Endothelial cell of umbilical vein (primary cell): ENCODE measurements at regions of chrX and their contacts with region 1.

Region 1: DNA sequence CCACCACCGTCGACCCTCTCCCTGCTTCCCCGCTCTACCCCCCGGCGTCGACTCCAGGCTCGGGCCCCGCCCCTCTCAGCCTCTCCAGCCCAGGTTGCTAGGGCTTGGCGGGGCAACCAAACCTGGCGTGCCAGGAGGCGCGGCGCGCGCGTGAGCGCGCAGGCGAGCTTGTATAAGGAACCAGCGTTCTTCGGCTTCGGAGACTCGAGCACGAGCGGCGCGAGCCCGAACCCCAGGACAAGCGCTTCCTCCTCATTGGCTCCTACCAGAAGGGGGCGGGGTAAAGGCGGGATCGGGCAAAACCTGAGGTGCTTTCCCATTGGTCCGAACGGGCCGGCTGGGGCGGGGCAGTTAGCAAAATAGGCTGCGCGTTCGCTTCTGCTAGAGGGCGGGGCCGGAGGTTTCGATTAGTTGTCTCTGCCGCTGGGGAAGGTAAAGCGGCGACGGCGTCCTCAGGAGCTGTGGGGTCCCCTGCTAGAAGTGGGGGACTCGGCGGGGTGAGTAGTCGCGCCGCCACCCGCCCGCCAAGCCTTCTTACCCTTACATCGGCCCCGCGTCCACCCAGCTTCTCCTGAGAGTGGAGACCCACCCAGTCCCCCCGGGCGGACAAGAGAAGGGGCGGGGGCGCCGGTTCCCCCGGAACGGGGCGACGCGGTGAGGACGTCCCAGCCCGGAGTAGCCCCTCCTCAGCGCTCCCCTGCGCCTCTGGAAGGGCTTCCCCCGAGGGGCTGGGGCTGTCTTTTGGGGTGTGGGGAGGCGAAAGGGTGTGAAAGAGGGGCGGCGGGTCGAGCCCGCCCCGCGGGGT is at the start of gene CDKL5:
- DNase-seq: peak; percentile 94
- H3K4me3 ChIP-seq: peak within 1 kb of the TSS; percentile 70 to 81 (median 79)
- H3K27ac ChIP-seq: no peak within 1 kb of the TSS
- H3K4me1 ChIP-seq: no peaks in the 10 kb centered on the region
- H3K27me3 ChIP-seq: peaks cover 0 to 2% of the 10 kb centered on the region in 2 experiments
- CTCF ChIP-seq: no peak
- POLR2A ChIP-seq: no peak
- total RNA-seq, gene CDKL5: 4.2 and 4.3 TPM in 2 replicates

Region 2: GRCh38 chrX:18582910-18583493 is 157.6 kb after region 1 on chrX:
- CTCF ChIA-PET with region 1: no interaction called
- POLR2A ChIA-PET with region 1: no interaction called
- dilution Hi-C with region 1: no loop called
- intact Hi-C with region 1: loop called (anchors 10 kb)
- DNase-seq: peak; percentile 36
- H3K4me3 ChIP-seq: no peak overlapping the region
- H3K27ac ChIP-seq: no peak overlapping the region
- H3K4me1 ChIP-seq: peaks cover 3% of the 10 kb centered on the region
- H3K27me3 ChIP-seq: no peaks in the 10 kb centered on the region
- CTCF ChIP-seq: no peak
- POLR2A ChIP-seq: no peak

Region 3: GRCh38 chrX:18674788-18675735 is 249.7 kb after region 1 on chrX:
- CTCF ChIA-PET with region 1: interaction called, 3 read pairs
- POLR2A ChIA-PET with region 1: no interaction called
- dilution Hi-C with region 1: no loop called
- intact Hi-C with region 1: loop called (anchors 2 kb)
- DNase-seq: peak; percentile 80
- H3K4me3 ChIP-seq: peak overlapping the region; percentile 63 to 76 (median 70)
- H3K27ac ChIP-seq: peak overlapping the region; percentile 60
- H3K4me1 ChIP-seq: no peaks in the 10 kb centered on the region
- H3K27me3 ChIP-seq: no peaks in the 10 kb centered on the region
- CTCF ChIP-seq: no peak
- POLR2A ChIP-seq: no peak

Region 4: DNA sequence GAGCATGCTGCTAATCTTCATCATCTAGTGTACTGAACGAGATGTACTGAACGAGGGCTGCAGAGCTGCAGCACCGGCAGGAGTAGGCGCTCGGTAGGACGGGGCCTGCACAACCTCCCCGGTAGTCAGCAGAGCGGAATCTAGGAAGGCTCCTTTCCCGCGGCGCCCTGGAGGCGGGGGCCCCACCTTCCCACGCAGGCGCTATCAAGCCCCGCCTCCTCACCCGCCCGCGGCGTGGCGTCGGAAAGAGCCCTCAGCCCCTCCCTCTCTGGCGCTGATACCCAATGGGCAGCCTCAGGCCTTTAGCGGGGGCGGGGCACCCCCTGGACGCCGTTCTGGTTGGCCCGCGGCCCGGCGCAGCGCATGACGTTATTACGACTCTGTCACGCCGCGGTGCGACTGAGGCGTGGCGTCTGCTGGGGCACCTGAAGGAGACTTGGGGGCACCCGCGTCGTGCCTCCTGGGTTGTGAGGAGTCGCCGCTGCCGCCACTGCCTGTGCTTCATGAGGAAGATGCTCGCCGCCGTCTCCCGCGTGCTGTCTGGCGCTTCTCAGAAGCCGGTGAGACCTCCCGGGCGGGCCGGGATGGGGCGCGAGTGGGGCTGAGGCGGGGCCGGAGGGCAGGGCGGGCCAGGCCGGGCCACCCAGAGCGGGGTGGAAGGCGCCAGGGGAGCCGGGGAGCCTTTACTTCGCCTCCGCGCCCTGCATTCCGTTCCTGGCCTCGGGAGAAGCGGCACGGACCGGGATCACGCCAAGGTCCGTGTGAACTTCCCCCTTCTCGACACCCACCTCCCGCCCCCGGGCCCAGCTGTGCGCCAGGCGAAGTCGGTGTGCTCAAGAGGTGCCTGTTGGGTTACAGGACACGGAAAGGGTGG is 918.4 kb after region 1 on chrX and contains the start of gene PDHA1:
- CTCF ChIA-PET with region 1: no interaction called
- POLR2A ChIA-PET with region 1: no interaction called
- dilution Hi-C with region 1: loop called (anchors 25 kb)
- intact Hi-C with region 1: no loop called
- DNase-seq: peak; percentile 92
- H3K4me3 ChIP-seq: peak within 1 kb of the TSS; percentile 66 to 90 (median 87)
- H3K27ac ChIP-seq: peak within 1 kb of the TSS; percentile 13
- H3K4me1 ChIP-seq: peaks cover 11% of the 10 kb centered on the region
- H3K27me3 ChIP-seq: no peaks in the 10 kb centered on the region
- CTCF ChIP-seq: no peak
- POLR2A ChIP-seq: peak; percentile 73
- total RNA-seq, gene PDHA1: 138 and 162 TPM in 2 replicates